CD8-positive, alpha-beta T cell (primary cell): ENCODE measurements at regions of chr7 and their contacts with region 1.

Region 1: GRCh38 chr7:23531794-23532489 is at the start of gene TRA2A:
- DNase-seq: peak; percentile 93 to 98 (median 97)
- ATAC-seq: peak; percentile 89
- H3K4me3 ChIP-seq: peak within 1 kb of the TSS; percentile 94 to 100
- H3K4me3 Mint-ChIP-seq: peak within 1 kb of the TSS; percentile 99
- H3K27ac ChIP-seq: peak within 1 kb of the TSS; percentile 97 to 100
- H3K27ac Mint-ChIP-seq: peak within 1 kb of the TSS; percentile 100
- H3K4me1 ChIP-seq: peaks cover 31% of the 10 kb centered on the region
- H3K4me1 Mint-ChIP-seq: peaks cover 42% of the 10 kb centered on the region
- H3K27me3 ChIP-seq: no peaks in the 10 kb centered on the region
- H3K27me3 Mint-ChIP-seq: no peaks in the 10 kb centered on the region
- CTCF ChIP-seq: no peak
- total RNA-seq, gene TRA2A: 258 to 271 TPM

Region 2: GRCh38 chr7:23105644-23106056 is 426.3 kb before region 1 on chr7 and contains the start of gene KLHL7:
- CTCF ChIA-PET with region 1: no interaction called
- POLR2A ChIA-PET with region 1: no interaction called
- intact Hi-C with region 1: loop called (anchors 2 to 5 kb)
- DNase-seq: peak; percentile 92 to 98 (median 96)
- ATAC-seq: peak; percentile 95
- H3K4me3 ChIP-seq: peak within 1 kb of the TSS; percentile 93 to 94
- H3K4me3 Mint-ChIP-seq: peak within 1 kb of the TSS; percentile 98
- H3K27ac ChIP-seq: peak within 1 kb of the TSS; percentile 97
- H3K27ac Mint-ChIP-seq: peak within 1 kb of the TSS; percentile 95
- H3K4me1 ChIP-seq: peaks cover 23% of the 10 kb centered on the region
- H3K4me1 Mint-ChIP-seq: peaks cover 49% of the 10 kb centered on the region
- H3K27me3 ChIP-seq: no peaks in the 10 kb centered on the region
- H3K27me3 Mint-ChIP-seq: no peaks in the 10 kb centered on the region
- CTCF ChIP-seq: no peak
- total RNA-seq, gene KLHL7: 19.2 to 20.2 TPM

Region 3: DNA sequence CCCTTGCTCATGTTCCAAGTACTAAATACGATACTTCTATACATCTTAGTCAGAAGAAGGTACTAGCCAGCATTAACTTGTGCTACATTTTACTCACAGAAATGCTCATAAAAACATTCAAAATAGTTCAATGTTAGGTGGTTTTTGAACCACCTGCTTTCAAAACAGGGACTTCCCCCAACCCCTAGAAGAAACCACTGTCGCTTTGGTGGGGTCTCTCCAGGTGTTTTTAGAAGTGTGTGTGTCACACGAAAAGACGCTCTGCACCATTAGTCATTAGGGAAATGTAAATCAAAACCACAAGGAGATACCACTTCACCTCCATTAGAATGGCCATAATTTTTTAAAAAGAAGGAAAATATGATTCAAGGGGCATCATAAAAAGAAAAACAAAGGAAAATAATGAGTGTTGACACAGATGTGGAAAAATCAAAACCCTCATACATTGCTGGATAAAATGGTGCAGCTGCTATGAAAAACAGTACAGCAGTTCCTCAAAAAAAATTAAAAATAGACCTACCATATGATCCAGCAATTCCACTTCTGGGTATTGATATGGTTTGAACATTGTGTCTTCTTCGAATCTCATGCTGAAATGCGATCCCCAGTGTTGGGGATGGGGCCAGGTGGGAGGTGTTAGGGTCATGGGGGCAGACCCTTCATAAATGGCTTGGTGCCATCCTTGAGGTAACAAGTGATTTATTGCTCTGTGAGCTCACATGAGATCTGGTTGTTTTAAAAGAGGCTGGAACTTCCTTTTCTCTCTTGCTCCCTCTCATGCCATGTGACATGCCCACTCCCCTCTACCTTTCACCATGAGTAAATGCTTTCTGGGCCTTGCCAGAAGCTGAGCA is 158.6 kb before region 1 on chr7:
- CTCF ChIA-PET with region 1: no interaction called
- POLR2A ChIA-PET with region 1: no interaction called
- intact Hi-C with region 1: loop called in 1 of 2 experiments (anchors 5 kb)
- DNase-seq: peak in 7 of 9 experiments; percentile 3 to 80 (median 35)
- ATAC-seq: peak; percentile 93
- H3K4me3 ChIP-seq: no peak overlapping the region
- H3K4me3 Mint-ChIP-seq: no peak overlapping the region
- H3K27ac ChIP-seq: no peak overlapping the region
- H3K27ac Mint-ChIP-seq: no peak overlapping the region
- H3K4me1 ChIP-seq: peaks cover 12% of the 10 kb centered on the region
- H3K4me1 Mint-ChIP-seq: peaks cover 17% of the 10 kb centered on the region
- H3K27me3 ChIP-seq: peaks cover 0 to 2% of the 10 kb centered on the region in 2 experiments
- H3K27me3 Mint-ChIP-seq: peaks cover 16% of the 10 kb centered on the region
- CTCF ChIP-seq: no peak

Region 4: GRCh38 chr7:23490357-23491135 is 41.4 kb before region 1 on chr7:
- CTCF ChIA-PET with region 1: no interaction called
- POLR2A ChIA-PET with region 1: interaction called, 3 read pairs
- intact Hi-C with region 1: loop called in 1 of 2 experiments (anchors 5 kb)
- DNase-seq: peak; percentile 32 to 81 (median 62)
- ATAC-seq: peak; percentile 93
- H3K4me3 ChIP-seq: peak overlapping the region; percentile 66 to 67
- H3K4me3 Mint-ChIP-seq: peak overlapping the region; percentile 80
- H3K27ac ChIP-seq: peak overlapping the region; percentile 35 to 70
- H3K27ac Mint-ChIP-seq: peak overlapping the region; percentile 82
- H3K4me1 ChIP-seq: peaks cover 12% of the 10 kb centered on the region
- H3K4me1 Mint-ChIP-seq: peaks cover 3% of the 10 kb centered on the region
- H3K27me3 ChIP-seq: no peaks in the 10 kb centered on the region
- H3K27me3 Mint-ChIP-seq: no peaks in the 10 kb centered on the region
- CTCF ChIP-seq: no peak

Region 5: DNA sequence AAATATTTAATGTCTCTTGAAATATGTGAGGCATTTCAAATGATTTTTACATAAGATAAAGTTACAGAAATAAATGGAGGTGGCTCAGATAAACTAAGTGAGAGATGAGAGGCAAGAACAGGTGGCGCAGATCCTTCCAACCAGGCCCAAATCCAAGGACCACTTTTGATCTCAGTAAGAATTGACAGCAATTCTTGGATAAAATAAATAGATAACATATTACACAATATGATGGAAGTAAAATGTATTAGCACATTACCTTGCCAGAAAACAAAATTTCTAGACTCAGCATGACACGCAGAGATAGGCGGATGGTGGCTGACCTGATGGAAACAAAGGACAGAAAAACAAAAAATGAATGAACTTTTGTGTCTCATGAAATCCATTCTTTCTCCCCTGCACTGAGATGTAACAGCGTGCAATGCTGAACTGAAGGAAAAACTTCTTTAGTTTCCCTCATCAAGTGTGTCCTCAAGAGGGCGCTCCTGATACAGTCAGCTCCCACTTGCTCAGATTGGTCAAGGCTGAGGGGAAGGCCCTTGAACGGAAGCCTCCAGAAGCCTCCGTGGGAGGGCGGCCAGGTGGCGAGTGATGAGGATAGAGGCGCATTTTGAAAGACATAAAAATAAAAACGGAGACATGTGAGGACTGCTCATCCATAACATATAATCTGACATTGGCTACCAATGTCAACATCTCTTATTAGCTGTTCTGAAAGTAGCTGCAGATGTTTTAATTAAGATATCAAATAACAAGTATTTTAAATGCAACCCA is 1288.2 kb after region 1 on chr7:
- CTCF ChIA-PET with region 1: no interaction called
- POLR2A ChIA-PET with region 1: no interaction called
- intact Hi-C with region 1: loop called in 1 of 2 experiments (anchors 5 kb)
- DNase-seq: peak; percentile 30 to 90 (median 74)
- ATAC-seq: peak; percentile 5
- H3K4me3 ChIP-seq: peak overlapping the region in 1 of 2 experiments; percentile 19
- H3K4me3 Mint-ChIP-seq: peak overlapping the region; percentile 74
- H3K27ac ChIP-seq: peak overlapping the region; percentile 52 to 90
- H3K27ac Mint-ChIP-seq: peak overlapping the region; percentile 93
- H3K4me1 ChIP-seq: peaks cover 28% of the 10 kb centered on the region
- H3K4me1 Mint-ChIP-seq: peaks cover 30% of the 10 kb centered on the region
- H3K27me3 ChIP-seq: no peaks in the 10 kb centered on the region
- H3K27me3 Mint-ChIP-seq: no peaks in the 10 kb centered on the region
- CTCF ChIP-seq: peak; percentile 84

Region 6: DNA sequence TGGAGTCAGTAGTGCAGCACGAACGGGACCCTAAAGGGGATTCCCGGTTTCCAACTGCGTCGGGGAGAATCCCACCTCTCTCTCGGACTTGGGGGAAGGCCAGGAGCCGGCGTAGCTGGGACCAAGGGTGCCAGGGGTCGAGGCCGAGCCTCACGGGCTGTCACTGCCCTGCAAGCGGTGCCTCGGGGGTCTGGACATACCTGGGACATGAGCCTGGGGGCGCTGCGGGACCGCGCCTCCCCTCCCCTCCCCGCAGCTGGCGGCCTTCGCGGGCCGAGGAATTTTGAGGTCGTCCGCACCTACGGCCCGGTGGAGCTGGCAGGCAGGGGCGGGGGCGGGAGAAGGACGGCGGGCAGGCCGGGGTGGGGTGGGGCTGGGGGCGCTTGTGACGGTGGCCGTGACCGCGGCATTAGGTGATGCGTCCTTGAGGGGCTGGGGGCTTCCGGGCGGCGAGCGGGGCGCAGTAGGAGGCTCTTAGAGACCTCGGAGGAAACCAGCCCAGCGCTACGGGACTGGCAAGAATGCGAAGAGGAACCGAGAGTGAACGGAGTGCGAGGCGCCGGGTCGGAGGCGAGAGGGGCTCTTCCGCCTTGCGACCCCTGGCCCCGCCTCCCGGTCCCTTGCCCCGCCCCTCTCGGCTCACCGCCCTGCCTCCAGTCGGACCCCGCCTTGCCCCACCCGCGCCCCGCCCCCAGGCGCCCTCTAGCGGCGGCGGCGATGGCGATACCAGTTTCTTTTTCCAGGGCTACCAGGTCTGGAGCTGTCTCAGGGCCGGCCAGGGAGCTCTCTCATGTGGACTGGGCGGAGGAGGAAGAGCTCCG is 1648.0 kb after region 1 on chr7:
- CTCF ChIA-PET with region 1: no interaction called
- POLR2A ChIA-PET with region 1: no interaction called
- intact Hi-C with region 1: loop called in 1 of 2 experiments (anchors 2 kb)
- DNase-seq: peak; percentile 92 to 99 (median 95)
- ATAC-seq: peak; percentile 98
- H3K4me3 ChIP-seq: peak overlapping the region; percentile 64 to 70
- H3K4me3 Mint-ChIP-seq: peak overlapping the region; percentile 91
- H3K27ac ChIP-seq: peak overlapping the region; percentile 57 to 83
- H3K27ac Mint-ChIP-seq: peak overlapping the region; percentile 92
- H3K4me1 ChIP-seq: peaks cover 7% of the 10 kb centered on the region
- H3K4me1 Mint-ChIP-seq: peaks cover 22% of the 10 kb centered on the region
- H3K27me3 ChIP-seq: no peaks in the 10 kb centered on the region
- H3K27me3 Mint-ChIP-seq: peaks cover under 1% of the 10 kb centered on the region
- CTCF ChIP-seq: peak; percentile 91